ENCODE measurements at regions of chr2 and their contacts with region 1.

Region 1: DNA sequence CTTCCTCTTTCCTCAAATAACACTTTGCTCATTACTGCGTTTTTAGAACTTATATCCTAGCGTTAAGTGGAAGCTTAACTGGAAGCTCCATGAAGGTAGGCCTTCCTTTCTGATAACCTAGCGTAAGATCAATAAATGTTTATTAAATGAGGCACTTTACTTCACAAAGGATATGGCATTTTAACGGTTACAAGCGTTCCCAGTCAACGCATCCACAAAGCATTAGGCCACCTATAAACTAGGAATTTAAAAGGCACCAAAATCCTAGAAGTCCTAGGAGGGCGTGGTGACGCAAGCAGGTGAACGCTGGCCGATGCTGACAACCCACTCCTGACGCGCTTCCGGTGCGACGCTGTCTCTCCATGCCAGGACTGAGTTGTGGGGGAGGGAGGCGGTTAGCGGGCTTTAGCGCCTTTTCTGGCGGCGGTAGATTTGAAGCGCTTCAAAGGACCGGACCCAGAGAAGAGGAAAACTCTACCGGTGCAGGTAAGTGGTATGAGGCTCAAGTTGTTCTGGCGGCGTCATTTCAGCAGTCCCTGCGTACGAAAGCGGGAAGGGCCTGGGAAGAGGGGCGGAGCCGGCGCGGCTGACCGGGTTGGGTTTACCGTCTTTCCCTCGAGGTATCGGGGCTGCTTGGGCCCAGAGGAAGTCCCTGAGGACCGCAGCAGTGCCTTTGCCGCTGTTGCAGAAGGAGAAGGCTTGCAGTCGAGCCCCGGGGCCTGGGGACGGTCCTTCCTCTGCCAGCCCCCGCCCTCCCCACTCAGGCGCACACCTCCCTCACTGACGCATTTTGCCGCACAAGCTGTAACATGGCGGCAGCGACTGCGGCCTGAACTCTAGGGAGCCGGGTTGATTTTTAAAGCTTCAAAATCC is at the start of gene PPIG:
- DNase-seq: peak; percentile 90 to 94 (median 91)
- ATAC-seq: peak; percentile 96 to 98 (median 98)
- H3K4me3 ChIP-seq: peak within 1 kb of the TSS; percentile 72 to 98 (median 83)
- H3K27ac ChIP-seq: peak within 1 kb of the TSS; percentile 94 to 99 (median 97)
- H3K4me1 ChIP-seq: peaks cover 9 to 32% (median 24%) of the 10 kb centered on the region in 12 donors
- H3K27me3 ChIP-seq: no peaks in the 10 kb centered on the region
- CTCF ChIP-seq: no peak
- POLR2A ChIP-seq: no peak
- total RNA-seq, gene PPIG: 19.9 to 48.8 (median 39.9) TPM

Region 2: DNA sequence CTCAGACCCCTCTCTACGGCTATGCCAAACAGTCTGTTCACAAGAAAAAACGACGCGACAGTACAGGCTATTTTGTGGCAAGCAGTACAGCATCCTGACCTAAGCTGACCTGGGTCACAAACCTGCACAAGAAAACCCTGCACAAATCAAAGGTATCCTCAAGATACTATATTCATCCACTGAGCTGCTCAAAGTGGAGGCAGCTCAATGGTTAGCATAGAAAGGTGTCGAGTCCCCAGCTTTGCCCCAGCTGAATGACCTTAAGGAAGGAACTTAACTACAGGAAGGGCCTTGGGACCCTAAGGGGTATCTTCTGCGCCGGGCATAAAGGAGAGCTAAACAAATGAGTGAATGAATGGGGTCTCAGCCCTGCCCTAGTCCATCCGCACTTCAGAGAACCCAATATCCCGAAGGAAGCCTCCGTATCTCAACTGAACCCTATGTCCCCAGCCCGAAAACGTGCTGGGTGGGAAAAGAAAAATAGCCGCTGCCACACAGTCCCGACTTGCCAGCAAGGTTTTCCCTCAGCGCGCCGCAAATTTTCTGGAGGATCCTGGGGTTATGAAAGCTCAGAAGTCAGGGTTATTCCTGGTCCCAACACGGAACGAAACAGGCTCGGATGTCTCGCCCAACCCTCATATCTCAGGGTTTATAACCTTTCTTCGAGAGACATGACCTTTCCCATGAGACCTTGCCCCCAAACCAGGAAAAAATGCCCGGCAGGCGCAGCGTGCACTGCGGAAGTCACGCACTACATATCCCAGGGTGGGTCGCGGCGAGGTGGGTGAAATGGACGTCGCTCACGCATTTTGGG is 10.9 kb before region 1 on chr2 and contains the start of gene FASTKD1:
- intact Hi-C with region 1: loop called in 1 of 10 experiments (anchors 1 kb)
- DNase-seq: peak; percentile 92 to 96 (median 94)
- ATAC-seq: peak; percentile 98 to 100 (median 99)
- H3K4me3 ChIP-seq: peak within 1 kb of the TSS; percentile 58 to 89 (median 74)
- H3K27ac ChIP-seq: peak within 1 kb of the TSS; percentile 63 to 92 (median 83)
- H3K4me1 ChIP-seq: peaks cover 0 to 17% (median 6%) of the 10 kb centered on the region in 12 donors
- H3K27me3 ChIP-seq: no peaks in the 10 kb centered on the region
- CTCF ChIP-seq: no peak
- POLR2A ChIP-seq: peak in 1 of 2 donors; percentile 57
- total RNA-seq, gene FASTKD1: 25.3 to 103 (median 69.4) TPM

Region 3: GRCh38 chr2:169716238-169716886 is 132.1 kb after region 1 on chr2:
- intact Hi-C with region 1: no loop called
- DNase-seq: peak in 1 of 5 donors; percentile 35
- ATAC-seq: peak; percentile 33 to 52 (median 38)
- H3K4me3 ChIP-seq: peak overlapping the region in 1 of 12 donors; percentile 34
- H3K27ac ChIP-seq: peak overlapping the region in 1 of 12 donors; percentile 45
- H3K4me1 ChIP-seq: peaks cover 0 to 26% (median 13%) of the 10 kb centered on the region in 12 donors
- H3K27me3 ChIP-seq: no peaks in the 10 kb centered on the region
- CTCF ChIP-seq: no peak
- POLR2A ChIP-seq: no peak

Region 4: DNA sequence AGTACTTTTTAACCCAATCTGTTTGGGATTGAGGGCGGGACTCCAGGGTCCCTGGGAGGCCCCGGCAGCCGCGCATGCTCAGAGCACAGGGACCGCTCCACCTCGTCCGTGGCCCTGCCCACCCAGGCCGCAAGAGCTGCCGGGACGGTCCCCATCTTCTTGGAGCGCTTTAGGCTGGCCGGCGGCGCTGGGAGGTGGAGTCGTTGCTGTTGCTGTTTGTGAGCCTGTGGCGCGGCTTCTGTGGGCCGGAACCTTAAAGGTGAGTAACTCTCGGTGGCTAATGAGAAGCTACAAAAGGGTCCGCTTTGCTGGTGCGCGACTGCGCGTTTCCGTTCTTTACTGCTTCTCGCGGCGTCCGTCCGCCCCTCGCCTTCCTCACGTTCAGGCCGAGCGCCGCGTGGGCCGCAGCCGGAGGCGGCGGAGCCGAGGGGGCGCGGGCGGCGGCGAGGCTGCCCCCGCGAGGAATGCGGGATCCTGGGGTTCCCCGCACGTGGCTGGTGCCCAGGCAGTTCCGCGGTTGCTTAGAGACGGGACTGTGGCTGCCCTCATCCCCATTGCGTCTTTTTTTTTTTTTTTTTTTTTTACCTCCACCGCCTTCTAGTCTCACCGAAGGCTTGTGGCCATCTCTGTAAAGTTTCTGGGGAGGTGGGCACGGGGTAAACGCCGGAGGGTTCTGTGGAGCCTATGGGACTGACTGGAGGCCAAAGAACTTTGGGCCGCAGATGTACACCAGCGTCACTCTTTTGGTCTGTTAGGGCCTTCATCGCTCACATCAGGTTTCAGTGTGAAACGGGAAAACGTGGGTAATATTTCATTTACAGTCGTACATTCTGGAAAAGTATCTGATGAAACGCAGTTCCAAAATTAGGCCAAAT is 214.7 kb after region 1 on chr2 and contains the start of gene SSB:
- intact Hi-C with region 1: loop called in 1 of 10 experiments (anchors 10 kb)
- DNase-seq: peak; percentile 93 to 97 (median 96)
- ATAC-seq: peak; percentile 100
- H3K4me3 ChIP-seq: peak within 1 kb of the TSS; percentile 65 to 98 (median 84)
- H3K27ac ChIP-seq: peak within 1 kb of the TSS; percentile 74 to 91 (median 79)
- H3K4me1 ChIP-seq: peaks cover 0 to 31% (median 7%) of the 10 kb centered on the region in 12 donors
- H3K27me3 ChIP-seq: no peaks in the 10 kb centered on the region
- CTCF ChIP-seq: peak in 1 of 12 donors; percentile 17
- POLR2A ChIP-seq: peak in 1 of 2 donors; percentile 76
- total RNA-seq, gene SSB: 37.4 to 60.6 (median 53.9) TPM

Region 5: DNA sequence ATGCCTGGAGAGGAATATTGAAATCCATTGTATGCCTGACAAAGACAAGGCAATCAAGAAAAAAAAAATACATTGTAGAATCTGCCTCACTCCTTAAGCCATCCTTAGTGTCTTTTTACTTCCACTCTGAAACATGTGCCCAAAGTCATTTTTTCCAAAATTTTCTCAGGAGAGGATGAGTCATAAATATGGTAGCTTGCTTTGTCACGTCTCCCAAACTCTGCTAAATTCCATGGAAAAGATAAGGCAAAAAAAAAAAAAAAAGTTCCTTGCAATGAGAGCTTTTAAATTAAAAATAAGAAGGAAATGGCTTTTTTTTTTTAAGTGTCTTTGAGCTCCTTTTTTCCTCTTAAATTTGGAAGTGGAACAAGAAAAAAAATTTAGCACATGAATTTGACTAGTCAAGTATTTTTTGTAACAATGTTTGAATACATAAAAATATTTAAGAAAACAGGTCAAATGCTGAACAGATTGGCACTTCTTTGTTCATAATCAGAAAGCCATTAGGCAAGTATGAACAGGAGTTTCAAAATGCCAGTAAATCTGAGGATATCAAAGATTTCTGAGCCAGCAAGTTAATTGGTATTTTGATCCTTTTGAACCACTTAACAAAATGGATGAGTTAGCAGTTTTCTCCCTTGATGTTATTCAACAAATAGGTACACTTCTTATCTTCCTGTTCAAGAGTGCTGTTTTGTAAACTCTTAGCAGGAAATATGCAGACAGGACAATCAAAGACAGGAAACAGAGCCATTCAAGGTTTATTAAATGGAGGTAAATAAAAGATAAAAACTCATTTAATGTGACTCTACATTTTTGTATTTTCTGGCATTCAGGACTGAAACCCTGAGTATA is 883.6 kb after region 1 on chr2:
- intact Hi-C with region 1: no loop called
- DNase-seq: no peak
- ATAC-seq: no peak
- H3K4me3 ChIP-seq: no peak overlapping the region
- H3K27ac ChIP-seq: no peak overlapping the region
- H3K4me1 ChIP-seq: peaks cover 0 to 8% (median 0%) of the 10 kb centered on the region in 12 donors
- H3K27me3 ChIP-seq: no peaks in the 10 kb centered on the region
- CTCF ChIP-seq: no peak
- POLR2A ChIP-seq: no peak